CD4-positive, alpha-beta memory T cell (primary cell): ENCODE measurements at regions of chr3 and their contacts with region 1.

Region 1: GRCh38 chr3:31567036-31567435 is 34.3 kb downstream of the STT3B start:
- DNase-seq: peak in 3 of 5 donors; percentile 19 to 43 (median 25)
- H3K4me3 ChIP-seq: no peak overlapping the region
- H3K4me3 Mint-ChIP-seq: peak overlapping the region in 7 of 8 donors; percentile 1 to 72 (median 54)
- H3K27ac ChIP-seq: no peak overlapping the region
- H3K27ac Mint-ChIP-seq: peak overlapping the region in 4 of 7 donors; percentile 11 to 61 (median 38)
- H3K4me1 ChIP-seq: peaks cover 92% of the 10 kb centered on the region
- H3K4me1 Mint-ChIP-seq: peaks cover 72 to 90% (median 83%) of the 10 kb centered on the region in 4 donors
- H3K27me3 ChIP-seq: no peaks in the 10 kb centered on the region
- H3K27me3 Mint-ChIP-seq: no peaks in the 10 kb centered on the region

Region 2: DNA sequence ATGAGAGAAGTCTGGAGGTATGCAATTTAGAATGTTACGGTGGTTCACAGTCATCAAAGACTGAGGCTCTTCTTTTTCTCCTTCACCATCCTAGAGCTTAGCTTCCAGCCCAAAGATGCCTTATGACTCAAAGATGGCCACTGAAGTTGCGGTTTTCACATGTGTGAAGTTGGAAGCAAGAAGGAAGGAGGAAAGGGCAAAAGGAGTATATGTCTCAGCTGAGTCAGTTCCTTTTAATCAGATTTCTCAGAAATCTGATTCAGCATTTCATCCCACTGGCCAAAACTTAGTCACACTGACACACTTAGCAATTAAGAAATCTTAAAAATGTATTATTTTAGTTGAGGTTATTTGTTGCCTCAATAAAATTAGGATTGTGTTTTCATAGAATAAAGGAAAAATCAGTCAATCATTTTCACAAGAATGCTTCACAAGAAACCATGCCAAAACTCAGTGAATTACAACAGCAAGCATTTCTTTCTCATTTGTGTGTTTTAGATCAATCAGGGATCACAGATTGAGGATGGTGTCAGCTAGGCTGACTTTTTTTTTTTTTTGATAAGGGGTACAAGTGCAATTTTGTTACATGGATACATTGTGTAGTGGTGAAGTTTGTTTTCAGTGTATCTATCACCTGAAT is 461.5 kb before region 1 on chr3:
- CTCF ChIA-PET with region 1: no interaction called
- POLR2A ChIA-PET with region 1: no interaction called
- intact Hi-C with region 1: no loop called
- DNase-seq: no peak
- H3K4me3 ChIP-seq: no peak overlapping the region
- H3K4me3 Mint-ChIP-seq: no peak overlapping the region
- H3K27ac ChIP-seq: no peak overlapping the region
- H3K27ac Mint-ChIP-seq: no peak overlapping the region
- H3K4me1 ChIP-seq: no peaks in the 10 kb centered on the region
- H3K4me1 Mint-ChIP-seq: peaks cover 0 to 9% (median 5%) of the 10 kb centered on the region in 4 donors
- H3K27me3 ChIP-seq: no peaks in the 10 kb centered on the region
- H3K27me3 Mint-ChIP-seq: no peaks in the 10 kb centered on the region

Region 3: GRCh38 chr3:31253782-31254181 is 313.3 kb before region 1 on chr3:
- CTCF ChIA-PET with region 1: no interaction called
- POLR2A ChIA-PET with region 1: no interaction called
- intact Hi-C with region 1: no loop called
- DNase-seq: no peak
- H3K4me3 ChIP-seq: no peak overlapping the region
- H3K4me3 Mint-ChIP-seq: no peak overlapping the region
- H3K27ac ChIP-seq: no peak overlapping the region
- H3K27ac Mint-ChIP-seq: no peak overlapping the region
- H3K4me1 ChIP-seq: peaks cover 11% of the 10 kb centered on the region
- H3K4me1 Mint-ChIP-seq: peaks cover 26 to 32% (median 27%) of the 10 kb centered on the region in 4 donors
- H3K27me3 ChIP-seq: no peaks in the 10 kb centered on the region
- H3K27me3 Mint-ChIP-seq: no peaks in the 10 kb centered on the region

Region 4: DNA sequence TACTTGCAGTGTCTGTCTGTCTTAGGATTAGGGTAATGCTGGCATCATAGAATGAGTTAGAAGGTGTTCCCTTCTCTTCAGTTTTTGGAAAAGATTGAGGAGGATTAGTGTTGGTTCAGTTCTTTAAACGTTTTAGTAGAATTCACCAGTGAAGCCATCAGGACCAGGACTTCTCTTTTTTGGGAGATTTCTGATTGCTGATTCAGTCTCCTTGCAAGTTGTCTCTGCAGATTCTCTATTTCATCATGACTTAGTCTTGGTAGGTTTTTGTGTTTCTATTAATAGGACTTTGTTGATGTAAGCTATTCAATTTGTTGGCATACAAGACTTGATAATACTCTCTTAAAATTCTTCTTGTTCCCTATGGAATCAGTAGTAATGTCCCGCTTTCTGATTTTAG is 14.6 kb after region 1 on chr3:
- CTCF ChIA-PET with region 1: interaction called, 4 read pairs
- POLR2A ChIA-PET with region 1: interaction called, 3 read pairs
- intact Hi-C with region 1: loop called (anchors 2 kb)
- DNase-seq: no peak
- H3K4me3 ChIP-seq: no peak overlapping the region
- H3K4me3 Mint-ChIP-seq: peak overlapping the region in 3 of 8 donors; percentile 3 to 56 (median 33)
- H3K27ac ChIP-seq: no peak overlapping the region
- H3K27ac Mint-ChIP-seq: peak overlapping the region in 5 of 7 donors; percentile 2 to 64 (median 31)
- H3K4me1 ChIP-seq: peaks cover 67% of the 10 kb centered on the region
- H3K4me1 Mint-ChIP-seq: peaks cover 47 to 62% (median 57%) of the 10 kb centered on the region in 4 donors
- H3K27me3 ChIP-seq: no peaks in the 10 kb centered on the region
- H3K27me3 Mint-ChIP-seq: no peaks in the 10 kb centered on the region

Region 5: GRCh38 chr3:31596176-31596575 is 29.1 kb after region 1 on chr3:
- CTCF ChIA-PET with region 1: no interaction called
- POLR2A ChIA-PET with region 1: no interaction called
- intact Hi-C with region 1: no loop called
- DNase-seq: no peak
- H3K4me3 ChIP-seq: no peak overlapping the region
- H3K4me3 Mint-ChIP-seq: peak overlapping the region in 5 of 8 donors; percentile 6 to 44 (median 32)
- H3K27ac ChIP-seq: no peak overlapping the region
- H3K27ac Mint-ChIP-seq: peak overlapping the region in 4 of 7 donors; percentile 27 to 70 (median 50)
- H3K4me1 ChIP-seq: peaks cover 47% of the 10 kb centered on the region
- H3K4me1 Mint-ChIP-seq: peaks cover 41 to 61% (median 49%) of the 10 kb centered on the region in 4 donors
- H3K27me3 ChIP-seq: no peaks in the 10 kb centered on the region
- H3K27me3 Mint-ChIP-seq: no peaks in the 10 kb centered on the region